ENCODE measurements at regions of chr1 and their contacts with region 1.

Region 1: GRCh38 chr1:154974063-154974807 is at the start of gene CKS1B:
- DNase-seq: peak; percentile 100
- H3K4me3 ChIP-seq: peak within 1 kb of the TSS; percentile 83
- H3K27ac ChIP-seq: peak within 1 kb of the TSS; percentile 89
- H3K4me1 ChIP-seq: peaks cover 52% of the 10 kb centered on the region
- CTCF ChIP-seq: no peak
- total RNA-seq, gene CKS1B: 149 and 204 TPM in 2 replicates

Region 2: DNA sequence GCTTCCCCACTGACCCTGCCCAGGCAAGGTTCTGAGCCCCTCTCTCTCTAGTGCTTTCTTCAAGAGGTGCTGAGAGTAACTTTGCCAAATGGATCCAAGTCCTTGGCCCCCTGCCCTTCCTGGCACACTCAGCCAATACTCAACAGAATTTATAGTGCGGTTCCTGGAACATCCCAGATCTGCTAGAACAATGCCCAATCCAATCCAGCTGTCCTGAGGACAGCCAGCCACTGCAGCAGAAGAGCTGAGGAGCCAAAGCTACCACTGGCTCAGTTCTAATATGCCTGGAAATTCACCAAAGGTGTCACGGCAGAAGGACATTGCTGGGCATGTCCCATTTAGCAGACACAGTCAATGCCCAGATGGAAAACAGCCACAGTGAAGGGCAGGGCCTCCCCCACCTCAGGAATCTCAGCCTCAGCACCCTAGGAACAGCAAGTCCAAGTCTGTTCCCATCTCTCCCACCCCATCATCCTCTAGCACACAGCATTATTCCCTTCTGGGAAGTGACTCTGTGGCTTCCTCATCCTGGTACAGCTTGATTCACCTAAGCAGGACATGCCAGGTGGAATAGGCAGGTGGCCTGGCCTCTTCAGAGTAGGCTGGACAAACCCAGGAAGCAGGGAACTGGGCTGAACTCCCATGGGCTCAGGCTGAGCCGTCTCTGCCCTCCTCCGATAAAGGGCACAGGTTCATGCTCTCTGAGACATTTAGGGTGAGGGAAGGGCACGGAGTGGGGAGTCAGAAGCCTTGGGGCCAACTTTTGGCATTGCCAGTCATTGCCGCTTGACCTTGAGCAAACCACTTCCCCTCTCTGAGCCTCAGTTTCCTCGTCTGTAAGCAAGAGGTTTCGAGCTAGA is 62.3 kb before region 1 on chr1:
- CTCF ChIA-PET with region 1: no interaction called
- POLR2A ChIA-PET with region 1: no interaction called
- intact Hi-C with region 1: no loop called
- DNase-seq: no peak
- H3K4me3 ChIP-seq: no peak overlapping the region
- H3K27ac ChIP-seq: no peak overlapping the region
- H3K4me1 ChIP-seq: no peaks in the 10 kb centered on the region
- CTCF ChIP-seq: no peak

Region 3: DNA sequence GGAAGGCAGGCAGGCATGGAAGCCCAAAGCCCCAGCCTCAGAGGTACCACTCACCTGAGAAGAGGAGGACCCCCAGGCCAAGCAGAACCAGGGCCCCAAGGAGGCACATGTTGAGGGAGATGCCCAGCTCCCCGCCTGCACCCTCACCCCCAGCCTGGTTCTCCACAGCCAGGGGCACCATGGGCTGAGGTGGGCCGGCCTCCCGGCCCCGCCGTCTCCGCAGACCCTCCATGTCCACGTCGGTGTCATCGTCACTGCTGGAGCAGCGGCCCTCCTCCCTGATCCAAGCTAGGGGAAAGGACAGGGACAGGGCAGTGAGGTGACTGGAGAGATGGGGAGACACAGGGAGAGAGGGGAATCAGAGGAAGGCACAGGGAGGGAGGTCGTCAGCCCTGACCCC is 26.2 kb before region 1 on chr1:
- CTCF ChIA-PET with region 1: no interaction called
- POLR2A ChIA-PET with region 1: no interaction called
- intact Hi-C with region 1: no loop called
- DNase-seq: no peak
- H3K4me3 ChIP-seq: no peak overlapping the region
- H3K27ac ChIP-seq: no peak overlapping the region
- H3K4me1 ChIP-seq: peaks cover 56% of the 10 kb centered on the region
- CTCF ChIP-seq: no peak

Region 4: DNA sequence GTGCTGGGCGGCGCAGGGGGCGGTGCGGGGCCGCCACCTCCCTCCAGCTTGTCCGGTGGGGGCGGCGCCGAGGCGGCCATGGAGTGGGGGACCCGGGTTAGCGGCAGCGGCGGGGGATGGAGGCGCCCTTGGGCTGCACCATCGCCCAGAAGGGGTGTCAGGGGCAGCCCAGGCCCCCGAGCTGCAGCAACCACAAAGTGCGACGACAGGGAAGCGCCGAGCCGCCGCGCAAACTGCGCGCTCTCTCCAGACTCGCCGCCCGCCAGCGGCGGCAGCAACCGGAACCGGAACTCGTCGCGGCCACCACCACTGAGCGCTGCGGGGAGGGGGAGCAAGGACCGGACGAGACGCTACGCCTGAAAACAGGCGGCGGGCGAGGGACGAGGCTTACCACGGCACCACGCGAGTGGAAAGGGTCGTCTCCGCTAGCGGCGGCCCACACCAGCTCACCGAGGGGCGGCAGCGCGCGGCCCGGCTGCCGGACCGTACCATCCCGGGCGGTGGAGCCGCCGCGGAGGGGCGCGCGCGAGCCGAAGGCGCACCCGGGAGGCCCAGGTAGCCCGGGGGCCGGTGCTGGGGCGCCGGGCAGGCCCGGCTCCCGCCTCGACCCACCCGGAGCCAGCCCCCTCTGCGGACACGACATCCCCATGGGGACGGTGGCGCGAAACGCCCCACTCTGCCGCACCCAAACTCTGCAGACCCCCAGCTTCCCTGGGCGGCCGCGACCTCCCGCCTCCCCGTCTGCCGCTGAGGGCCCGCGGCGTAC is 12.6 kb before region 1 on chr1 and contains the start of gene PYGO2:
- CTCF ChIA-PET with region 1: no interaction called
- POLR2A ChIA-PET with region 1: interaction called, 6 read pairs
- intact Hi-C with region 1: loop called (anchors 1 kb)
- DNase-seq: peak; percentile 88
- H3K4me3 ChIP-seq: peak within 1 kb of the TSS; percentile 82
- H3K27ac ChIP-seq: peak within 1 kb of the TSS; percentile 77
- H3K4me1 ChIP-seq: peaks cover 33% of the 10 kb centered on the region
- CTCF ChIP-seq: peak; percentile 80
- total RNA-seq, gene PYGO2: 36.5 and 44.3 TPM in 2 replicates

Region 5: DNA sequence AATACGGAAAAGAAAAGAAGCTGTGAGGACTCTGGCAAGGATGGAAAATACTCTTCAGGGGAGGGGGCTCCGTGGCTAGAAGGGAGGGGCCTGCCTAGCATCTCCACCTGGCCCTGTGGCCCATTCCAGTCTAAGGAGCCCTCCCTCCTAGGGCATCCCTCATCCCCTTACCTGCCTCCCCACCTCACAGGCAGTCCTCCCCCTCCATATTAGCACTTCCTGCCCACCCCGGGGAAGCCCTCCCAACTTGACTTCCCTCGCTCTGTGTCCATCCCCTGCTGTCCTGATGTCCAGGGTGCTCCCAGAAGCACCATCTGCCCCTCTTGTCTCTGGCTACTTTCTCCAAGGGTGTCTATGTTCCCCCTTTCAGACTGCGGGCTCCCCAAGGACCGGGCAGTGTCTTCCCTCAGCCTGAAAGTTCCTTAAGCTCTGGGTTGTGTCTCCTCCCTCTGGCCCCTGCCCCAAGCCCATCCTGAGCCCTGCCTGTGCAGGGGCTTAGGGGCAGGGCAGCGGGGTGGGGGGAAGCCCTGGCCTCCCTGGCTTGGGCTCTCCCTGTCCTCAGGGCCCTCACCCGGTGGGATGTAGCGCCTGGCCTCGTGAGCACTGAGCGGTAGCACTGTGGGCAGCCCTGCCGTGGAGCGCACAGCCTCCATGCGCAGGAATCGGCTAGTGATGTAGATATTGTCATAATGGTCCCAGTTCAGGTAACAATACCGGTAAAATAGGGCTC is 55.4 kb after region 1 on chr1:
- CTCF ChIA-PET with region 1: no interaction called
- POLR2A ChIA-PET with region 1: no interaction called
- intact Hi-C with region 1: no loop called
- DNase-seq: no peak
- H3K4me3 ChIP-seq: no peak overlapping the region
- H3K27ac ChIP-seq: no peak overlapping the region
- H3K4me1 ChIP-seq: no peaks in the 10 kb centered on the region
- CTCF ChIP-seq: no peak

Region 6: GRCh38 chr1:155951753-155952504 is 977.7 kb after region 1 on chr1:
- CTCF ChIA-PET with region 1: no interaction called
- POLR2A ChIA-PET with region 1: no interaction called
- intact Hi-C with region 1: no loop called
- DNase-seq: no peak
- H3K4me3 ChIP-seq: no peak overlapping the region
- H3K27ac ChIP-seq: no peak overlapping the region
- H3K4me1 ChIP-seq: peaks cover 11% of the 10 kb centered on the region
- CTCF ChIP-seq: no peak